GM23248 (cell line): ENCODE measurements at regions of chr2 and their contacts with region 1.

Region 1: DNA sequence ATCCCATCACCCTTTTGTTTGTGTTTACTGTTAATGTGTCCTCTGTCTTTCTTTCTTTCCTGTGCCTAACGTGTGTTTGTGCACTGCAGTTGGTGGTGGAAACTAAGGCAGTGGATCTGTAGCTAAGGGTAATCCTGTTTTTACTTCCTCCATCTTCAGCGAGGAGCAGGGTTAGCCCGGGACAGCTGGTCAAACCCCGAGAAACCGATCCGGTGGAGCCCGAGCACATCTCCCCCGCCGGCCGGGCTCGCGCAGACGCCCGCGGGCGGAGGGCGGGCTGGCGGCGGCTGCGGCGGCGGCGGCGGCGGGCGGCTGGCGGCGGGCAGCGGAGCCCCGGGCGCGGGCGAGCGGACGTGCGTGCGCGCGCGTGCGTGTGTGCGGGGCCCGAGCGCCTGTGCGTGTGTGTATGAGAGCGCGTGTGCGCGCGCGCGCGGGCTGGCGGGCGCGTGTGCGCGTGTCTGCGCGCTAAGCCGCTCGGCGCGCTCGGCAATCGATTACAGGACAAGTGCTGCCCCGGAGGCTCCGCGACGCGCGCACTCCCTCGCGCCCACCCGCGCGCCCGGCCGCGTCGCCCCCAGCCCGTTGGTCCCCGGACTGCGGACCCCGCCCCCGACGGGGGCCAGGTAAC is at the start of gene IKZF2:
- DNase-seq: peak; percentile 97
- H3K4me3 ChIP-seq: peak within 1 kb of the TSS; percentile 97
- H3K27ac ChIP-seq: peak within 1 kb of the TSS; percentile 85
- H3K4me1 ChIP-seq: peaks cover 32% of the 10 kb centered on the region
- H3K27me3 ChIP-seq: no peaks in the 10 kb centered on the region
- total RNA-seq, gene IKZF2: 13.5 and 19.6 TPM in 2 replicates

Region 2: DNA sequence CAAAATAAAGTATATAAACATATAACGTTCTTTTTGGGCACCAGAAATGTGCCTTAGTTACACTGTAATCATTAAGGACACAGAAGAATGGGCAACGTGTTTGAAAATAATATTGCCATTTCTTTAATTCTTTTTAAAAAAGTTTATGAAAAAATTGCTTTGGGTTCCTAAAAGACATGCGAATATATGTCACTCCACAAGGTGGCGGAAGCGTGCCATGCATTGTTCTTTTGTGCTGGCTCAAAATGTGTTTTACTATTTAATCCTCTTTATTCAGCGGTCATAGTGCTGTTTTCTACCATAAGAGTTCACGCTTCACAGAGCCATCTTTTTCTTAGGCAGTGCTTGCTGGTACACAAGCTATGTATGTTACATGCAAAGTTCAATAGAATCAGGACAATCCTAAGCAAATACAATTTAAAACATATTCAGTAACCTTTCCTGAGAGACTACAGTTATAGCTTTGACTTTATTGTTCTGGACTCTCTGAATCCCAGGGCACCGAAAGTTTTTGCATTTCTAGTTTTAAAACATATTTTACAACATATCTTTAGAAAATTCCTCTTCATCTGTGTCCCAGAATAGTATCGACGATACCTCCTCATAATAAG is 465.2 kb before region 1 on chr2:
- in situ Hi-C with region 1: loop called (anchors 5 kb)
- DNase-seq: peak; percentile 81
- H3K4me3 ChIP-seq: peak overlapping the region; percentile 48
- H3K27ac ChIP-seq: no peak overlapping the region
- H3K4me1 ChIP-seq: peaks cover 20% of the 10 kb centered on the region
- H3K27me3 ChIP-seq: no peaks in the 10 kb centered on the region

Region 3: GRCh38 chr2:212777020-212777491 is 374.5 kb before region 1 on chr2:
- in situ Hi-C with region 1: loop called (anchors 10 kb)
- DNase-seq: peak; percentile 66
- H3K4me3 ChIP-seq: peak overlapping the region; percentile 63
- H3K27ac ChIP-seq: peak overlapping the region; percentile 4; the same call in 1 of the 2 replicates
- H3K4me1 ChIP-seq: peaks cover 12% of the 10 kb centered on the region
- H3K27me3 ChIP-seq: no peaks in the 10 kb centered on the region